Activated naive CD8-positive, alpha-beta T cell treated with anti-CD3 and anti-CD28 coated beads, Interleukin-2, amount 10 ng/mL, durations not matched to agents 7 days and 5 days (primary cell): ENCODE measurements at regions of chr2 and their contacts with region 1.

Region 1: GRCh38 chr2:38095996-38096861 is 20.3 kb upstream of the CYP1B1 start:
- DNase-seq: no peak
- ATAC-seq: peak; percentile 83
- H3K4me3 Mint-ChIP-seq: peak overlapping the region; percentile 49
- H3K27ac Mint-ChIP-seq: peak overlapping the region; percentile 52
- H3K4me1 Mint-ChIP-seq: peaks cover 24% of the 10 kb centered on the region
- H3K27me3 Mint-ChIP-seq: peaks cover 53% of the 10 kb centered on the region

Region 2: GRCh38 chr2:38076606-38077430 is 19.4 kb before region 1 on chr2:
- POLR2A ChIA-PET with region 1: interaction called, 11 read pairs
- DNase-seq: peak; percentile 76
- ATAC-seq: peak; percentile 78
- H3K4me3 Mint-ChIP-seq: peak overlapping the region; percentile 85
- H3K27ac Mint-ChIP-seq: peak overlapping the region; percentile 73
- H3K4me1 Mint-ChIP-seq: peaks cover 24% of the 10 kb centered on the region
- H3K27me3 Mint-ChIP-seq: peaks cover 50% of the 10 kb centered on the region